MCF 10A (cell line): ENCODE measurements at regions of chr15 and their contacts with region 1.

Region 1: DNA sequence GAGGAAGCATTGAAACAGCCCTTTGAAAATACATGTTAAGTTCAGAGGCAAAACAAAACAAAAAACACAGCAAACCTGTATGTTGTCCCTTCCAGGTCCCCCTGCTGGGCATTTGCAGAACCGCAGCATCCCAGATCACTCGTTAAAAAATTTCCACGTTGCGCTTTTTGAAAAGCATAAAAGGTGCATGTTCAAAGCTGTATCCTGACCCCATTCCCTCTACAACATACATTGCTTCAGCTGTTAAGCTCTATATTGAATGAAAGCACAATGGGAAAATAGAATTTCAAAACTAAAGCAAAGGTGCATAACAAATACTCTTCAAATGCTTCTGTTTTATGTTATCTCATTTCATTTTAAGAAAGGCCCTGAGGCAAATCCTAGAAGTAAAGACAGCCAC is 328.3 kb downstream of the THSD4 start:
- DNase-seq: peak; percentile 71
- H3K4me3 Mint-ChIP-seq: no peak overlapping the region
- H3K27ac Mint-ChIP-seq: no peak overlapping the region
- H3K4me1 Mint-ChIP-seq: peaks cover 19% of the 10 kb centered on the region
- H3K27me3 Mint-ChIP-seq: no peaks in the 10 kb centered on the region
- CTCF ChIP-seq: peak; percentile 86

Region 2: DNA sequence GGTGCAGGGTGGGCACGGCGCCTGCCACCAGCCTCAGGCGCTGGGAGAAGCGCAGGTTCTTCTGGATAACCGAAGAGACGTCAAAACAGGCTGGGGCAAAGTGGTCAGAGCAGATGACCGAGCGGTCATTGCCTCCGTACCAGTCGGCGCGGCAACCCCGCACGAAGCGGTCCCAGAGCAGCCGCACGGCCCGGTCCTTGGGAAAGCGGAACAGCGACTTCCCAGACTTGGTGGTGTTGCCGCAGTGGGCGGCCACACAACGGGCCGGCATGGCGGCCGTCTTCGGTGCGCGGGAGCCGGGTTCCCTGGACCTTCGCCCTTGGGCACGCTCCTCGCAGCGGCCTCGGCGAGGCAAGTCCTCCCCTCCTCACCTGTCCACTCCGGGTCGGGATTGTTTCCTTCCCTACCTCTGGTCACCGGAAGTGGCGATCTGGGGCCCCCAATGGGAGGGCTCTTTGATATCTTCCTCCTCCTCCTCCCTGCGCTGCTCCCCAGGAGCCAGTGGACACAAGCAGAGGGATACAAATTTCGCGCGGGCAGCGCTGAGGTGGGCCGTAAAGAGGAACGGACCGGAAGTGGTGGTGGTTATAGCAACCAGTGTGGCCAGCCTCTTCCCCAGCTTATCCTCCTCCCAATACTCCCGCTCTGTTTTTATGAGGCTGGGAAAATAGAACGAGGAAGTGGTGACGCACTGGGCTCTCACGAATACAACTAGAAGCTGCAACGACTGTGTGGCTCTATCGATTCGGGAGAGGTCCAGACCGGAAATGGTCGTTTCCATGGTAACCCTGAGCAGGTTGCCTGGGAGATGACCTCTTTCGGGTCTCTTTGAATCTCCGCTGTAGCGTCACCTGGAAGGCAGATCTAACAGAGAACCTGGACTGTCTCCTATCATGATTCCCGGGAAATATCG is 551.3 kb before region 1 on chr15 and contains the starts of genes LRRC49 and THAP10:
- CTCF ChIA-PET with region 1: interaction called, 5 read pairs
- POLR2A ChIA-PET with region 1: no interaction called
- intact Hi-C with region 1: loop called (anchors 1 kb)
- DNase-seq: peak; percentile 90
- H3K4me3 Mint-ChIP-seq: peak within 1 kb of the TSS; percentile 87
- H3K27ac Mint-ChIP-seq: peak within 1 kb of the TSS; percentile 53
- H3K4me1 Mint-ChIP-seq: peaks cover 17% of the 10 kb centered on the region
- H3K27me3 Mint-ChIP-seq: no peaks in the 10 kb centered on the region
- CTCF ChIP-seq: no peak
- total RNA-seq, gene LRRC49: 6.9 and 8.4 TPM in 2 replicates
- total RNA-seq, gene THAP10: 4.0 and 5.7 TPM in 2 replicates

Region 3: GRCh38 chr15:71011503-71012155 is 431.9 kb before region 1 on chr15:
- CTCF ChIA-PET with region 1: interaction called, 34 read pairs
- POLR2A ChIA-PET with region 1: interaction called, 5 read pairs
- intact Hi-C with region 1: loop called (anchors 1 kb)
- DNase-seq: peak; percentile 60
- H3K4me3 Mint-ChIP-seq: no peak overlapping the region
- H3K27ac Mint-ChIP-seq: no peak overlapping the region
- H3K4me1 Mint-ChIP-seq: no peaks in the 10 kb centered on the region
- H3K27me3 Mint-ChIP-seq: no peaks in the 10 kb centered on the region
- CTCF ChIP-seq: peak; percentile 76

Region 4: GRCh38 chr15:71120425-71120944 is 323.1 kb before region 1 on chr15:
- CTCF ChIA-PET with region 1: interaction called, 17 read pairs
- POLR2A ChIA-PET with region 1: interaction called, 4 read pairs
- intact Hi-C with region 1: loop called (anchors 1 kb)
- DNase-seq: no peak
- H3K4me3 Mint-ChIP-seq: no peak overlapping the region
- H3K27ac Mint-ChIP-seq: no peak overlapping the region
- H3K4me1 Mint-ChIP-seq: peaks cover 31% of the 10 kb centered on the region
- H3K27me3 Mint-ChIP-seq: no peaks in the 10 kb centered on the region
- CTCF ChIP-seq: no peak

Region 5: DNA sequence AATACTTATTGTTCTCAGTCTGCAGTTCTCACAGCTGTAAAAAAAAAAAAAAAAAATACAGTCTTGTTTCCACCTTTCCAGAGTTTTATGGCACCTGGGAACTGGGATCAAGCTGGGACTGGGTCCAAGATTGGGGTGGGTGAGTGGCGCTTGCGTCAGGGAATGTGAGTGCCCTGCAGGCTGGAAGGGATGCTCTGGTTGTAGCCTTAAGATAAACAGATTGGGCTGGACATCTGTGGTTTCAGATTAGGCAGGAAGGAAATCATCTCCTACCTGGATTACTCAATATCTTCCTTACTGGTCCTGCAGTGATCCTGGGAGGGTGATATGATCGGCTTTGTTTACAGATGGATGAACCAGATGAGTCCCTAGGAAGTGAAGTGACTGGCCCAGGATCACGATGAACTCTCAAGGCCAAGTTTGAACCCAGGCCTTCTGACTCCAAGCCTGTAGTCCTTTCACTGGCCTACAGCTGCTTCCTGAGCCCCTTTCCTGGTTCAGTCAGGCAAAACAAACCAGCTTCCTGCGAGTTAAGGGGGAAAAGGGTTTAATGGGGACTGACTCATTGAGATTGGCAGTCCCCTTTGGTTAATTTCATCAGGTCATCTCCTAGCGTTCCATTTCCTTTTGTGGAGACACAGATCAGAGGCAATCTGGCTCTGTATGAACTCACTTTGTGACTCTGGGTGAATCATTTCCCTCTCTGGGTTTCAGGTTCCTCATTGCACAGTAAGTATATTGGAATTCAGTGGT is 148.5 kb before region 1 on chr15:
- CTCF ChIA-PET with region 1: interaction called, 6 read pairs
- POLR2A ChIA-PET with region 1: interaction called, 7 read pairs
- intact Hi-C with region 1: loop called (anchors 2 kb)
- DNase-seq: peak; percentile 99
- H3K4me3 Mint-ChIP-seq: peak overlapping the region; percentile 45
- H3K27ac Mint-ChIP-seq: peak overlapping the region; percentile 95
- H3K4me1 Mint-ChIP-seq: peaks cover 54% of the 10 kb centered on the region
- H3K27me3 Mint-ChIP-seq: no peaks in the 10 kb centered on the region
- CTCF ChIP-seq: no peak

Region 6: DNA sequence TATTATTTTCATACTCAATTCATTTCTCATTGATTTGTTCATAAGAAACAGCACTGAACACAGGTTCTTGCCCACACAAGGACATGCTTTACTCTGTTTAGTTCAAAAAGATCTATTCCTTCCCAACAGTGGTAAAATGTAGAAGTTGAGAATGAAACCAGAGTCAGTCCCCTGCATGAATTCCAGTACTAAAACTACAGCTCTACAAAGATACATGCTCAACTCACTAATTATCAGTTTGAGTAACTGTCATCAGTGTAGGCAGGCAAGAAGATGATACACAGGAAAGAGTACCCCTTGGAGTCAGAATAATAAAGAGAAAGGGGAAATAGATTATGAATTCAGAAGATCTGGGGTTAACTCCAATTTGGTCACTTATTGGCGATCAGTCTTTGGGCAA is 410.0 kb after region 1 on chr15:
- CTCF ChIA-PET with region 1: no interaction called
- POLR2A ChIA-PET with region 1: no interaction called
- intact Hi-C with region 1: no loop called
- DNase-seq: no peak
- H3K4me3 Mint-ChIP-seq: no peak overlapping the region
- H3K27ac Mint-ChIP-seq: no peak overlapping the region
- H3K4me1 Mint-ChIP-seq: no peaks in the 10 kb centered on the region
- H3K27me3 Mint-ChIP-seq: no peaks in the 10 kb centered on the region
- CTCF ChIP-seq: no peak